Mammary epithelial cell (primary cell): ENCODE measurements at regions of chr7 and their contacts with region 1.

Region 1: GRCh38 chr7:27160546-27161213 is 4.2 kb upstream of the HOXA7 start:
- DNase-seq: peak; percentile 69
- H3K4me3 ChIP-seq: peak overlapping the region; percentile 48 to 72 (median 56)
- H3K27ac ChIP-seq: peak overlapping the region; percentile 53
- H3K4me1 ChIP-seq: peaks cover 61% of the 10 kb centered on the region
- H3K27me3 ChIP-seq: peaks cover 8% of the 10 kb centered on the region
- CTCF ChIP-seq: peak; percentile 78 to 98

Region 2: DNA sequence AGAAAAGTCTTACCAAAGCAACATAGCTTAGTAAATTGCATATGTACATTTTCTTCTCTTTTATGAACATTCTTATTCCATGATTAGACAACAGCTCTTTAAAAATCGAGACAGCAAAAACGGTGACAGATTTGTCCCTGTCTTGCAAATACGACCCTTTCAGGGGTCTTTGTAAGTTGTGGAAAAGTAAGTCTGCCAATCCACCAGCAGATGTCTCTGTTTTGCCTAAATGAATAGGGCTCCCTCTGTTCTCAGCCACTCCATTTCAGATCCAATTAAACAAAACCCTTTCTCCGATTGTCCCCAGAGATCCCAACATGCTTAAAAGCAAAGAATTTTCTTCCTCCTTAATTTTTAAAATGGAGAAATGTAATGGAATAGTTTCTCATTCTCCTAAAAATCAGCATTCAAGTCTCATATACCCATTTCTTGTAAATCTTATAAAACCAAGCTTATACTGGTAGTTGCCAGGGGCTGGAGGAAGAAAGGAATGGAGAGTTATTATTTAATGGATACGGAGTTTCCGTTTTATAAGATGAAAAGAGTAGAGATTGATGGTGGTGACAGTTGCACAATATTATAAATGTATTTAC is 1069.7 kb before region 1 on chr7:
- CTCF ChIA-PET with region 1: no interaction called
- dilution Hi-C with region 1: no loop called
- in situ Hi-C with region 1: loop called in 1 of 2 experiments (anchors 25 kb)
- intact Hi-C with region 1: loop called (anchors 10 kb)
- DNase-seq: peak; percentile 44
- H3K4me3 ChIP-seq: no peak overlapping the region
- H3K27ac ChIP-seq: no peak overlapping the region
- H3K4me1 ChIP-seq: peaks cover 33% of the 10 kb centered on the region
- H3K27me3 ChIP-seq: no peaks in the 10 kb centered on the region
- CTCF ChIP-seq: peak; percentile 56 to 77

Region 3: GRCh38 chr7:26291699-26292538 is 868.8 kb before region 1 on chr7 and contains the start of gene SNX10:
- CTCF ChIA-PET with region 1: no interaction called
- dilution Hi-C with region 1: no loop called
- in situ Hi-C with region 1: no loop called
- intact Hi-C with region 1: loop called (anchors 5 kb)
- DNase-seq: peak; percentile 57
- H3K4me3 ChIP-seq: peak within 1 kb of the TSS; percentile 66 to 79 (median 67)
- H3K27ac ChIP-seq: peak within 1 kb of the TSS; percentile 46
- H3K4me1 ChIP-seq: peaks cover 3% of the 10 kb centered on the region
- H3K27me3 ChIP-seq: no peaks in the 10 kb centered on the region
- CTCF ChIP-seq: peak; percentile 6 to 45
- total RNA-seq, gene SNX10: 6.0 to 13.0 TPM

Region 4: GRCh38 chr7:26667500-26668133 is 493.1 kb before region 1 on chr7:
- CTCF ChIA-PET with region 1: no interaction called
- dilution Hi-C with region 1: no loop called
- in situ Hi-C with region 1: no loop called
- intact Hi-C with region 1: loop called (anchors 1 kb)
- DNase-seq: peak; percentile 86
- H3K4me3 ChIP-seq: no peak overlapping the region
- H3K27ac ChIP-seq: no peak overlapping the region
- H3K4me1 ChIP-seq: no peaks in the 10 kb centered on the region
- H3K27me3 ChIP-seq: no peaks in the 10 kb centered on the region
- CTCF ChIP-seq: peak; percentile 86 to 87

Region 5: DNA sequence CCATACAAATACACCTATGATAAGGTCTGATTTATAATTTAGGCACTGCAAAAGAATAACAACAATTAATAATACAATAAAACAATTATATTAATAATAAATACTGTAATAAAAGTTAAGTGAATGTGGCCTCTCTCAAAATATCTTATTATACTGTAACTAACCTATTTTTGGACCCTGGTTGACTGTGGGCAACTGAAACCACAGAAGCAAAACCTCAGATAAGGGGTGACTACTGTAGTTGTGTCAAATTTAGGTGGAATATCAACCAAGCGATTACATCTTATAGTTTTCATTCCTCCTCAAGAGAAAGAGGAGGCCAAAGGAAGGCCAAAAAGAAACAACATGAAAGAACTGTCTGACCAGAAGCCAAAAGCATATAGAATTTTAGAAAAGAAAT is 400.2 kb before region 1 on chr7:
- CTCF ChIA-PET with region 1: no interaction called
- dilution Hi-C with region 1: no loop called
- in situ Hi-C with region 1: no loop called
- intact Hi-C with region 1: no loop called
- DNase-seq: no peak
- H3K4me3 ChIP-seq: no peak overlapping the region
- H3K27ac ChIP-seq: no peak overlapping the region
- H3K4me1 ChIP-seq: no peaks in the 10 kb centered on the region
- H3K27me3 ChIP-seq: no peaks in the 10 kb centered on the region
- CTCF ChIP-seq: no peak

Region 6: GRCh38 chr7:26853788-26854393 is 306.8 kb before region 1 on chr7:
- CTCF ChIA-PET with region 1: no interaction called
- dilution Hi-C with region 1: no loop called
- in situ Hi-C with region 1: no loop called
- intact Hi-C with region 1: loop called (anchors 1 kb)
- DNase-seq: peak; percentile 52
- H3K4me3 ChIP-seq: peak overlapping the region in 1 of 3 experiments; percentile 19
- H3K27ac ChIP-seq: peak overlapping the region; percentile 96
- H3K4me1 ChIP-seq: peaks cover 24% of the 10 kb centered on the region
- H3K27me3 ChIP-seq: no peaks in the 10 kb centered on the region
- CTCF ChIP-seq: peak; percentile 48 to 65